PC-3 (cell line): ENCODE measurements at regions of chr3 and their contacts with region 1.

Region 1: DNA sequence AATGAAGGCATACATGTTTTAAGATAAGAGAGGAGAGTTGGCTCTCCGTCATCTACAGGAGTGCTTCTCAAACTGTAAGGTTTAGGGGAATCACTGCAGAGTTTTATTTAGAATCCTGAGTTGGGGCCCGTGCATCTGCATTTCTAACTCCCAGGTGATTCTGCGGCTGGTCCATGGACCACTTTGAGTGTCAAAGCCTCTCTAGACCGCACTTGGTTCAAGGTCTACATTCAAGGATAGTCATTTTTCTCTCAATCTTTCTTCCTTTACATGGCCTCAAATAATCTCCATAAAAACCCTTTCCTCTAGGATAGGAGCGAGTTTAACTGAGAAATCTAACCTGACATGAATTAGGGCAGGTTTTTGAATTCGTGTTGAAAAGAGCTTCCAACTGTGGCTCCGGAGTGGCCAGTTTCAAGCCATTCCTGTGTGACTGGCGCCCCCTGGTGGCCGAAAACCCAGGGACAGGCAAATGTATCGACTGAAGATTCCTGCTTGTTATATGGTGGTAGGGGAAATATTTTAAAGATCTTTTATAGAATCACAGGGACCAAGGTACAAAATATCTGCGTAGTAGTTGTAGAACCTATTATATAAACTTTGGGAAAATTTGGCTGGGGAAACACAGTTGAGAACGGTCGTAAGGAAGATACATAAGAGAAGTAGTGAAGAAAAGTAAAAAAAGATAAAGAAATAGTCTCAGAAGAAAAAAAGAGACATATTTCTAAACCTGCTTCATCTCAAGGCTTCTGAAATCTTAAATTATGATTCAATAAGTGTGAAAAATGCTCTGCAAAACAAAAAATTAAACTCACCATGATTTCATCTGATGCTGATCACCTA is 11.9 kb downstream of the GABRR3 start:
- DNase-seq: peak; percentile 88
- ATAC-seq: peak; percentile 91
- H3K4me3 ChIP-seq: no peak overlapping the region
- H3K27ac ChIP-seq: no peak overlapping the region
- H3K4me1 ChIP-seq: no peaks in the 10 kb centered on the region
- H3K27me3 ChIP-seq: peaks cover 9% of the 10 kb centered on the region; the same call in 1 of the 2 replicates
- CTCF ChIP-seq: peak; percentile 99

Region 2: DNA sequence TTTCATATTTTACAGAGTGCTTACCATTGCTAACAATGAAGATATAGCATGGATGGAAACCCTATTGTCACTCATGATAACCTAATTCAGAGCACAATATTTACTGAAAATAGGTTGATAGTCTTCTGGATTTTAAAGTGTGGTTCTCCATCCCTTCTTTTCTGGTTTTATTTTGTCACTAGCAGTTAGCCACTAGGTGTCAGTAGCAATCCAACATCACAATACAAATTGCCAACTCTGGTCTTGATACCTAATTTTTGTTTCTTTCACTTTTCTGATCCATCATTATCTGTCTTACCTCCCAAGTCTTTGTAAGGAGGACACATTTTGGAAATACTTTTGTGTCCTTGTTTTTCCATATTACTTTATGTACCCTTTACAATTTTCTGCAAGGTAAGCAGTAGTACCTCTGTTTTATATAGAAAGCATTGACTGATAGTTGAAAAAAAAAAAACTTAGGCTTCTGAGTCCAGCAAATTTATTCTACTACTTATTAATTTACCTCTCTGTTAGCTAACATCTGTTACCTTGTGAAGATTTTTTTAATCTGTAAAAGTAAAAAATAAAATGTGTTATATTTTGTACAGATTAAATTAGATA is 229.7 kb before region 1 on chr3:
- CTCF ChIA-PET with region 1: no interaction called
- POLR2A ChIA-PET with region 1: no interaction called
- intact Hi-C with region 1: loop called (anchors 1 kb)
- DNase-seq: peak; percentile 71
- ATAC-seq: peak; percentile 60
- H3K4me3 ChIP-seq: no peak overlapping the region
- H3K27ac ChIP-seq: no peak overlapping the region
- H3K4me1 ChIP-seq: no peaks in the 10 kb centered on the region
- H3K27me3 ChIP-seq: no peaks in the 10 kb centered on the region
- CTCF ChIP-seq: peak; percentile 92

Region 3: DNA sequence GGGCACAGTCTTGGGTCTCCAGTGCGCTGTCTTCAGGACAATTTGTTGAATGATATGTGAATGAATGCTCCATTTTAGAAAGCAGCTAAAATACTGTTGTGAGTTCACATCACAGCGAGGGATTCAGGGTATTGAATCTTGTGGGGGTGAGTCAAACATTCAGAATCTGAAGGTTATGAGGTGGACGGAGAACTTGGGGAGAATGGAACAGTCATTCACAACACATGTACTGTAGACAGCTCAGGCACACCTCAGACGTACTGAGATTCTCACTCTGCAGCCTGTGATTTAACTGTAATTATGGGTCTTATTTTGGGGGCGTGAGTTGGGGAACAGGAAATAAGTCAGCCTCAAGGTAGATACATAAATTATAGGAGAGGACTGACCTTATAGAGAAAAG is 187.4 kb before region 1 on chr3:
- CTCF ChIA-PET with region 1: no interaction called
- POLR2A ChIA-PET with region 1: no interaction called
- intact Hi-C with region 1: no loop called
- DNase-seq: no peak
- ATAC-seq: no peak
- H3K4me3 ChIP-seq: no peak overlapping the region
- H3K27ac ChIP-seq: no peak overlapping the region
- H3K4me1 ChIP-seq: no peaks in the 10 kb centered on the region
- H3K27me3 ChIP-seq: no peaks in the 10 kb centered on the region
- CTCF ChIP-seq: no peak

Region 4: DNA sequence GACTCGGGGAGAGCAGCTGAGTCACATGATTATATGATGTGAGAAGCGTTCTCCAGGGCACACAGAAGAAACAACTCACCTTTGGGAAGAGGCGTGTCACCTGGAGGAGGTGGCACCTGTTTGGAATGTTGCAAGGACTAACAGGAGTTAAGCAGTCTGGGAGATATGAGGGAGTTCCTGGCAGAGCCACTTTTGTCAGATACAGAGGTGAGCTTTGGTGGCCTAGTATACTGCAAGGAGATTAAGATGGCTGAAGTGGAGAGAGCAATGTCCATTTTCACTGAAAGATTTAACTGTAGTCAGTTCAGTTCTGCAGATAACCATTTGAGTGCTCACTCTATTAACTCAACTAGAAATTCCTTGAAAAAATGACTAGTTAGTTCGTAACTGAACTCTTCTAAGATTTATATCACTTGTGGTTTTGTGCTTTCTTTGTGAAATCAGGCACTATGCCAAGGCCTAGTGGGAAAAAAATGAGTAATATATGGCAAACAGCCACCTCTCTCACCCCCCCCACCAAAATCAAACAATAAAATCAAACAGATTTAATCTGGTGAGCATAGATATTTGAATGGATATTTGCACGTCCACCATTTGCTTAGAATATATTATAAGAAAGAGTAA is 140.1 kb before region 1 on chr3:
- CTCF ChIA-PET with region 1: no interaction called
- POLR2A ChIA-PET with region 1: no interaction called
- intact Hi-C with region 1: loop called (anchors 5 kb)
- DNase-seq: peak; percentile 92
- ATAC-seq: peak; percentile 92
- H3K4me3 ChIP-seq: peak overlapping the region; percentile 54
- H3K27ac ChIP-seq: peak overlapping the region; percentile 90
- H3K4me1 ChIP-seq: peaks cover 26% of the 10 kb centered on the region
- H3K27me3 ChIP-seq: no peaks in the 10 kb centered on the region
- CTCF ChIP-seq: no peak

Region 5: GRCh38 chr3:97971677-97972567 is 51.3 kb before region 1 on chr3 and contains the start of gene RIOX2:
- CTCF ChIA-PET with region 1: no interaction called
- POLR2A ChIA-PET with region 1: no interaction called
- intact Hi-C with region 1: loop called (anchors 2 kb)
- DNase-seq: peak; percentile 82
- ATAC-seq: peak; percentile 88
- H3K4me3 ChIP-seq: peak within 1 kb of the TSS; percentile 75
- H3K27ac ChIP-seq: peak within 1 kb of the TSS; percentile 40
- H3K4me1 ChIP-seq: peaks cover 22% of the 10 kb centered on the region
- H3K27me3 ChIP-seq: no peaks in the 10 kb centered on the region
- CTCF ChIP-seq: no peak
- total RNA-seq, gene RIOX2: 31.0 and 46.4 TPM in 2 replicates

Region 6: GRCh38 chr3:98188545-98188944 is 165.3 kb after region 1 on chr3:
- CTCF ChIA-PET with region 1: no interaction called
- POLR2A ChIA-PET with region 1: no interaction called
- intact Hi-C with region 1: no loop called
- DNase-seq: peak; percentile 56
- ATAC-seq: peak; percentile 85
- H3K4me3 ChIP-seq: no peak overlapping the region
- H3K27ac ChIP-seq: no peak overlapping the region
- H3K4me1 ChIP-seq: no peaks in the 10 kb centered on the region
- H3K27me3 ChIP-seq: peaks cover 13% of the 10 kb centered on the region; the same call in 1 of the 2 replicates
- CTCF ChIP-seq: peak; percentile 65

Region 7: DNA sequence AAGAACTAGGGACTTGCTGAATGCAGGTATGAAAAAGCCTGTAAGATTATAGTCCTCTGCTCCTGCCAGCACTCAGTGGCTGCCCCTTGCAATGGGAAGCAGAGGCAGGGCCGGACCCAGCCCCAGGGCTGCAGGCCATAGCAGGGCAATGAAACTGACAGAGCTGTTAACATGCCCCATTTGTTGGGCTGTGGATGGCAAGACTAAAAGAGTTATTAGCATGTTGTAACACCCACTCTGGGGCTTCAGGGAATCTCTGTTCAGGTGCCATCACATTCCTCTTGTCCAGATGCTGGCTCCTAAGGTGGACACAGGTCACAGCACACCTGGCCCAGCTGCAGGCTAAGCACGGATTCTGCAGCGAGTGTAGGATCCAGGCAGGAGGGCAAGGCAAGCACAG is 251.7 kb after region 1 on chr3:
- CTCF ChIA-PET with region 1: no interaction called
- POLR2A ChIA-PET with region 1: interaction called, 24 read pairs
- intact Hi-C with region 1: no loop called
- DNase-seq: no peak
- ATAC-seq: no peak
- H3K4me3 ChIP-seq: no peak overlapping the region
- H3K27ac ChIP-seq: no peak overlapping the region
- H3K4me1 ChIP-seq: no peaks in the 10 kb centered on the region
- H3K27me3 ChIP-seq: peaks cover 16% of the 10 kb centered on the region
- CTCF ChIP-seq: no peak